Common myeloid progenitor, CD34-positive (primary cell): ENCODE measurements at regions of chr2 and their contacts with region 1.

Region 1: DNA sequence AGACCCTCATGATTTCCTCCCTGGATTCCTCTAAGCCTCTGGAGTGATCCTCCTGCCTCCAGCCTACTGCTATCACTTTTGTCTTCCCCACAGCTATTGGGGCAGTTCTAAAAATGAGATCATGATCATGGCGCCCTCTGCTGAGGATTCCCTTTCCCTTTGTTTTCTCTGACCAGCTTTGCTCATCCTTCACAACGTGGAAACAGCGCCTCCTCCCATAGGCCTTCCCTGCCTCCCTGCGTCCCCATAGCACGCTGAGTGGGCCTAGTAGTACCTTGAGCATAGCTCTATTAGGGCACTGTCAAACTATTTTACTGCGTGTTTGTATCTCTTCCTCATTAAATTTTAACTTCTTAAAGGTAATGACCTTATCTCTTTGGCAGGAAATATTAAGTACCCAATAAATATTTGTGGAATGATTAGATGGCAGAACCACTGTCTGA is 207.0 kb upstream of the FANCL start:
- DNase-seq: peak; percentile 59 to 71 (median 60)
- H3K4me3 ChIP-seq: no peak overlapping the region
- H3K27ac ChIP-seq: no peak overlapping the region
- H3K4me1 ChIP-seq: peaks cover 0 to 2% (median 0%) of the 10 kb centered on the region in 4 experiments
- H3K27me3 ChIP-seq: peaks cover 0 to 2% (median 0%) of the 10 kb centered on the region in 5 experiments

Region 2: GRCh38 chr2:58341047-58341446 is 107.0 kb before region 1 on chr2:
- CTCF ChIA-PET with region 1: no interaction called
- POLR2A ChIA-PET with region 1: no interaction called
- DNase-seq: no peak
- H3K4me3 ChIP-seq: no peak overlapping the region
- H3K27ac ChIP-seq: no peak overlapping the region
- H3K4me1 ChIP-seq: peaks cover 0 to 10% (median 0%) of the 10 kb centered on the region in 4 experiments
- H3K27me3 ChIP-seq: no peaks in the 10 kb centered on the region

Region 3: DNA sequence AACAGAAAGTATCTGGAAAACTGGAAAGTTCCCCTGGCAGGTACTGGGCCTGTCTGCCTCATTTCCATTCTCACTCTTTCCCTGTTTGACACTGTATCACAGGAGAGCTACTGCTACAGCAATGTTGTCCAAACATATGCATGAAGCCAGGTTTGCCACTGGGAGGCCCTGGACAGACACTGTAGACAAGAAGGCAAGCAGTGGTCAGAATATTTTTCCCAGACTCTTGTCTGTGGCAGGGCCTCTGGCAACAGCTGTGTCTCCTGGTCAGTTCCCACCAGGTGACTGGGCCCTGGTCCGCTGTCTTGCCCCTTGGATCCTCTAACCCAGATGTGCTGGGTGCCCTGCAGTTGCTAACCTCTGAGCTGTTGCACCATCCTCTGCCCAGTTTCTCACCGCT is 28.1 kb before region 1 on chr2:
- CTCF ChIA-PET with region 1: no interaction called
- POLR2A ChIA-PET with region 1: no interaction called
- DNase-seq: no peak
- H3K4me3 ChIP-seq: no peak overlapping the region
- H3K27ac ChIP-seq: no peak overlapping the region
- H3K4me1 ChIP-seq: peaks cover 0 to 3% (median 0%) of the 10 kb centered on the region in 4 experiments
- H3K27me3 ChIP-seq: peaks cover 0 to 1% (median 0%) of the 10 kb centered on the region in 5 experiments

Region 4: DNA sequence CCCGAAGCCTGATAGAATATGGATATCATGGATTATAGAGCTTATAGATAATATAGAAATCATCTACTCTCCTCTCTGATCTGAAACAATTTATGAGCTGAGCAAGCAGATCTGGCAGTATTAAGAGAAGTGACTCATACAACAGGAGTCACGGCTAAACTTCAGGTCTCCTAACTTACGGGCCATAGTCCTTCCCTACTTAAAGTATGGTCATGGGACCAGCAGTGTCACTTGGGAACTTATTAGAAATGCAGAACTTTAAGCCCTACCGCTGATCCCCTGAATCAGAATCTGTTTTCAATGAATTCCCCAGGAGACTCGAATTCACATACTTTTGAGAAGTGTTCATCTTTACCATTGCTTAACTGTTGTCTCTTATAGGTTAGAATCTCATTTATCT is 11.2 kb before region 1 on chr2:
- CTCF ChIA-PET with region 1: interaction called, 11 read pairs
- POLR2A ChIA-PET with region 1: no interaction called
- DNase-seq: no peak
- H3K4me3 ChIP-seq: no peak overlapping the region
- H3K27ac ChIP-seq: no peak overlapping the region
- H3K4me1 ChIP-seq: peaks cover 0 to 3% (median 0%) of the 10 kb centered on the region in 4 experiments
- H3K27me3 ChIP-seq: no peaks in the 10 kb centered on the region